ENCODE measurements at regions of chr2 and their contacts with region 1.

Region 1: DNA sequence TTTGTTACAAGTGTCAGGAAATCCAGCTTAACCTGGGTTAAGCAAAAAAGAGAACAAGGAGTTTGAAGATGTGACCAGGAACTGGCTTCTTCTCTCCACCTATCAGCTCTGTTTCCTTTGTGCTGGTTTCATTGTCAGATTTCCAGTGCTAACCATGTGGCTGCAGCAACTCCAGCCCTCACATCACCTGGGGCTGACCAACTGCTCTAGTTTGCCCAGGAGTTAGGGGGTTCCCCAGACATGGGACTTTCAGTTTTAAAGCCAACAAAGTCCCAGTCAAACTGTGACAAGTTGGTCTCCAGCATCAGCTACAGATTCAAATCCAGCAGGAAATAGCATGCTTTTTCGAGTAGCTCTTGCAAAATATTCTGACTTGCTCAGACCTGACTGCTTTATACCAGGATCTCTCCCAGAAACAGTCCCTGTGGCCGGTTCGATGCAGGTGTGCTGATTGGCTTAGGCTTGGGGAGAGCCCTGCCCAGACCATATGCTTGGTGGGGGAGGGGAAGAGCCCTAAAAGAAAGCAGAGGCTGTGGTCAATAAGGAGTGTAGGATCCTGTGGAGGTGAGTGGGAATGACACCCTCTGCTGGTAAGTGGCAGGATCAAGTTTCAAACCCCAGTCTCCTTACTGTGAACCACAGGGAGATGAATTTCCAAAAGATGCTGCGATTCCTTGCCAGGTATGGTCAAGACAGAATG is 49.5 kb downstream of the KCNE4 start:
- DNase-seq: no peak
- H3K4me3 ChIP-seq: no peak overlapping the region
- H3K27ac ChIP-seq: peak overlapping the region in 6 of 59 donors; percentile 2 to 66 (median 42)
- H3K27me3 ChIP-seq: no peaks in the 10 kb centered on the region
- CTCF ChIP-seq: peak in 53 of 56 donors; percentile 28 to 72 (median 51)

Region 2: GRCh38 chr2:222976521-222977076 is 124.9 kb before region 1 on chr2:
- intact Hi-C with region 1: loop called (anchors 5 kb)
- DNase-seq: no peak
- H3K4me3 ChIP-seq: no peak overlapping the region
- H3K27ac ChIP-seq: no peak overlapping the region
- H3K27me3 ChIP-seq: no peaks in the 10 kb centered on the region
- CTCF ChIP-seq: no peak

Region 3: DNA sequence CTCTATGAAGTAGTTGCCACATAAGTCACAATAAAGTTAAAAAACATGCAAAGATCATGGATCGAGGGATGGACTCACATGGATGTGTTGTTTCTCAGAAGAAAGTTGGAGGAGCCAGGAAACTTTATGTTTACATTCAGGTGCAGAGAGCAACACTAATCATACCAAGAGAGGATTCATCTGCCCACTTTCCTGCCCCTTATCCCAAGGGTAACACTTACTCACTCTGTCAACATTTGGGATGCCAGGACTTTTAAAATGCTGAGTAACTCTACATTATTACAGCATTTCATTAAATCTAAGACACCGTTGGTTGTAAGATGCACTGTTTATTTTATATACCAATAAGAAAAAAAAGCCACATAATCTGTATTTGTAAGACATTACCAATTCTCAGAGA is 120.9 kb after region 1 on chr2:
- intact Hi-C with region 1: no loop called
- DNase-seq: no peak
- H3K4me3 ChIP-seq: no peak overlapping the region
- H3K27ac ChIP-seq: no peak overlapping the region
- H3K27me3 ChIP-seq: no peaks in the 10 kb centered on the region
- CTCF ChIP-seq: no peak